HAP-1 (cell line): ENCODE measurements at regions of chr3 and their contacts with region 1.

Region 1: GRCh38 chr3:127544192-127544802 is 46.2 kb downstream of the TPRA1 start:
- DNase-seq: peak; percentile 66 to 87
- H3K4me3 ChIP-seq: no peak overlapping the region
- H3K4me1 ChIP-seq: peaks cover 4% of the 10 kb centered on the region; the same call in 1 of the 2 replicates
- H3K27me3 ChIP-seq: peaks cover 5% of the 10 kb centered on the region; the same call in 1 of the 2 replicates

Region 2: DNA sequence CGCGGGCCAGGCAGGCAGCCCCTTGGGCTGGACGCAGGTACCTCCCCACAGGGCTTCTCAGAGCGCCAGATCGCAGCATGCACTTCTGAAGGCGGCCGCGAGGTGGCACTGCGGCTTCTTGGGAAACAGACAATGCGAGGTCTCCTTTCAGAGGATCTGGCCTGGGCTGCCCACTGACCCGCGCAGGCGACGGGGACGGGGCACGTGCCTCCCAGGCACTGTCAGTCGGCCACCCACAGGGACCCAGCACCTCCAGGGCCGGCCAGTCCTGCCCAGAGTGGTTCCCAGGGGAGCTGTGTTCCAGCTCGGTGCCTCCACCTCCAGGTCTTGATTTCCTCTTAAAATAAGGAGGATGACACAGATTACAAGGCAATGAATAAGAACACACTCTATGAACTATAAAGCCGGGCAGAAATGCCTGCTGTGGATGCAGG is 865.0 kb before region 1 on chr3:
- in situ Hi-C with region 1: loop called (anchors 10 kb)
- DNase-seq: peak; percentile 45 to 91
- H3K4me3 ChIP-seq: no peak overlapping the region
- H3K4me1 ChIP-seq: no peaks in the 10 kb centered on the region
- H3K27me3 ChIP-seq: no peaks in the 10 kb centered on the region; the same call in none of the 2 replicates